HCT116 (cell line): ENCODE measurements at regions of chr11 and their contacts with region 1.

Region 1: DNA sequence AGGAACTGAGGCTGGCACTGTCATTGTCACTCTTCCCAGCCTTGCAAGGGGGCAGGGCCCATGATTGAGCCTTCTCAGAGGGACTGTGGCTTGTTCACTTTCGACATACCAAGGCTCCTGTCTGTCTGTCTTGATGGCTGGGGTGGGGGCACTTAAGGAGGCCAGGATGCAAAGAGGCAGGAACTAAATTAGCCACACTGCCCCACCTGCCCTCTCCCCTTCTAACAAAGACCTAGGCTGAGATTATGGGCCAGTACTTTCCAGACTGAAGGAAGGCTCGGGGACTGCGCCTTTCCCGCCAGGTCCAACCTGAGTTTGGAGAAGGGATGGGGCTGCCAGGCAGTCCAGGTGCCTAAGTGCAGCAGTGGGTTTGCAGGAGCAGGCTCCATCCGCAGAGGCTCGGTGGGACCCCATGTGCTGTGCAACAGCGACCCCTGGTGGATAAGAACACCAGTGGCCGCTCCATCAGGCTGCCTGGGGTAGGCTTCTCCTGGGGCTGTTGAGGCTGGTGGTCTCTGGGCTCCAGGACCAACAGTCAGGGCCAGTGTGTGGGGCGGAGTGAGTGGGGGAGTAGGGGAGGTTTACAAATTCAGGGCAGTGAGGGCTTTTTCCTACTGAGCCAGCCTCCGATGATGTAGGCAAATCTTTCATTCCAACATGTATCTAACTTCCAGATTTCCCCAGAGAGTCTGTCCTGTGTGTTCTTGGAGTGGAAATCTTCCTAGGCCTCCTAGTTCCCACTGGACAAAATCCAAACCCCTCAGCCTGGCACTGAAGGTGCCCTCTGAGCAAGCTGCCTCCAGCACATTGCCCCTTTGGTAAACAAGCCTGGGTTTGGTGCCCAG is 93.9 kb downstream of the INSC start:
- DNase-seq: peak; percentile 43
- ATAC-seq: peak; percentile 99
- H3K4me3 ChIP-seq: no peak overlapping the region
- H3K27ac ChIP-seq: no peak overlapping the region
- H3K4me1 ChIP-seq: no peaks in the 10 kb centered on the region
- H3K27me3 ChIP-seq: no peaks in the 10 kb centered on the region
- CTCF ChIP-seq: peak; percentile 83 to 95 (median 90)
- POLR2A ChIP-seq: no peak
- RAD21 ChIP-seq: peak; percentile 98

Region 2: GRCh38 chr11:14789879-14790484 is 418.6 kb before region 1 on chr11:
- CTCF ChIA-PET with region 1: interaction called, 7 read pairs
- POLR2A ChIA-PET with region 1: no interaction called
- RAD21 ChIA-PET with region 1: no interaction called
- intact Hi-C with region 1: loop called (anchors 2 kb)
- DNase-seq: no peak
- ATAC-seq: peak; percentile 46; the same call in 1 of the 2 replicates
- H3K4me3 ChIP-seq: no peak overlapping the region
- H3K27ac ChIP-seq: no peak overlapping the region
- H3K4me1 ChIP-seq: no peaks in the 10 kb centered on the region
- H3K27me3 ChIP-seq: no peaks in the 10 kb centered on the region
- CTCF ChIP-seq: peak; percentile 33 to 64 (median 64); a peak in 5 of 6 replicates
- POLR2A ChIP-seq: no peak
- RAD21 ChIP-seq: peak; percentile 72

Region 3: DNA sequence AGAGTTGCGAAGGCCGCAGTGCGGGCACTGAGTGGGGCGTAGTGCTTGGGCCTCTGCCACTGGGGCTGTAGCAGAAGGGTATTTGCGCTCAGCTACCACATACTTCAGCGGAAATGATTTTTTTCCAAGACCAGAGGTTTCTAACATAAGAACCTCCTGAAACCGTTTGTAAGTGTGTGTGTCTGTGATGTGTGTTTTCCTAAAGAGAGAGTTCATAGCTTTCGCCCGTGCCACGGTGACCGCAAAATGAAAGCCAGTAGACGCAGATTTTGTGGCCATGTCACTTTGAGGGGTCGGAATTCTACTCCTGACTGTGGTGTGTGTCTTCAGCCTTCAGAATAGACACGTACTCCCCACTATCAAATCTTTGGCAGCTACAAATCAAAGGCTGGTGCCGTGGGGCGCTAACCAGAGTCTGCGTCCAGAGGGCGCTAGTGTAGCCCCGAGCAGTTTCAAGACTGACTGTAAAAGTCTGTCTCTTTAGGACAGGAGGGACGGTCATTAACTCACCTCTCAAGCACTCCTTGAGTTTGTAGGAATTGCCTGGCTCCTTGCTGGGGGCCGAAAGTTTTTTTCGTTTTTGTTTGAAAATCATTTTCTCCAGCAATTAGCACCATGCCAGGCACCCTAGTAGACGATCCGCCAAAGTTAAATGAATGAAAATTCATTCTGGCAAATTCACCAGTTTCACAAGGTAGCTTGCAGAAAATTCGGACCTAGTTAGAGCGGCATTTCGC is 233.9 kb before region 1 on chr11:
- CTCF ChIA-PET with region 1: interaction called, 6 read pairs
- POLR2A ChIA-PET with region 1: no interaction called
- RAD21 ChIA-PET with region 1: no interaction called
- intact Hi-C with region 1: loop called (anchors 1 kb)
- DNase-seq: peak; percentile 54
- ATAC-seq: peak; percentile 86
- H3K4me3 ChIP-seq: no peak overlapping the region
- H3K27ac ChIP-seq: no peak overlapping the region
- H3K4me1 ChIP-seq: peaks cover 0 to 8% of the 10 kb centered on the region in 2 experiments; a peak in 1 of 4 replicates
- H3K27me3 ChIP-seq: no peaks in the 10 kb centered on the region
- CTCF ChIP-seq: peak; percentile 78 to 95 (median 90)
- POLR2A ChIP-seq: no peak
- RAD21 ChIP-seq: peak; percentile 70

Region 4: DNA sequence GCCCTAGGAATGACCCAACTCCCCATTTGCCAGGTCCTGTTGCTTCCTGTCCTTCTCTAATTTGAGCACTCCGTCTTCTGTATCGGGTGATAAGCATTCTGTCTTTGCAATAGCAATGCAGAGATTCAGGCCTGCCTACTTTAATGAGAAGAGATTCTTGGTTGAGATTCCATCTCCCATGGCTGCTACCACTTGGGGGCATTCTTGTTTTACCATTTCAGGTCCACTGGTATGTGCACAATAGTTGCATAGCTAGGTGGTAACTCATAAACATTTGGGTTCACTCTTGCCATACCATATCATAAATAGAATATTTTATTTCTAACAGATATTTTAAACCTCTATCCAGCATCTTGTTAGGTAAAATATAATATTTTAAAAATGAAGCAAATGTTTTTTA is 169.6 kb before region 1 on chr11:
- CTCF ChIA-PET with region 1: interaction called, 4 read pairs
- POLR2A ChIA-PET with region 1: no interaction called
- RAD21 ChIA-PET with region 1: no interaction called
- intact Hi-C with region 1: loop called (anchors 1 kb)
- DNase-seq: peak; percentile 31
- ATAC-seq: peak; percentile 58; the same call in 1 of the 2 replicates
- H3K4me3 ChIP-seq: no peak overlapping the region
- H3K27ac ChIP-seq: no peak overlapping the region
- H3K4me1 ChIP-seq: peaks cover 0 to 9% of the 10 kb centered on the region in 2 experiments; a peak in 2 of 4 replicates
- H3K27me3 ChIP-seq: no peaks in the 10 kb centered on the region
- CTCF ChIP-seq: peak; percentile 27 to 84 (median 40); a peak in 4 of 6 replicates
- POLR2A ChIP-seq: no peak
- RAD21 ChIP-seq: peak; percentile 91

Region 5: DNA sequence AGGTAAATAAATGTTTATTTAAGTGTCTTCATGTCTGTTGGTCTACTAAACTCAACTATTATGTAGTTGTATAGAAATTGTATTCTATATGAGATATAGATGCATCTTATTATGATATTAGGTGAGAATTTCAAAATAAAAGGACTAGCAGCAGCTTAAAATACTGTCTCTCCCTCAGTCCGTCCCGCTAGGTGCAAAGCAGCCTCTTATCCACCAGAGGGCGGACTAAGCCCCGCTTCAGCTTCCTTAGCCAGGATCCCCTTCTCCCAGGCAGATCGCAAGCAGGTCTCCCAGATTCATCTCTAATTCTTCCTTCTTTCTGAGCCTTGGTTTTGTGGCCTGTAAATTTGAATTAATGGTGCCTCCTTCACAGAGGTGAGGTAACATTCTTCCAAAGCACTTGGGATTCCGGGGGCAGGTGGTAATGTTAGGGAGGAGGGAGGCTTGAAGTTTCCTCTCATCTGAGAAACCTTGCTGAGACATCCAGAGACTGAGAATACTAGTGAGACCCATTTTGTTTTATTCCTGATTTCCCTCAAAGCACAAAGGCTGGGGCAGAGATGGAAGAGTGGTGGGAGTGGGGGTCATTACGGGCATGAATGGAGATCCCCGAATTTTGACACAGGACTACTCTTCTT is 107.4 kb before region 1 on chr11:
- CTCF ChIA-PET with region 1: interaction called, 42 read pairs
- POLR2A ChIA-PET with region 1: no interaction called
- RAD21 ChIA-PET with region 1: no interaction called
- intact Hi-C with region 1: loop called (anchors 1 kb)
- DNase-seq: peak; percentile 57
- ATAC-seq: peak; percentile 97
- H3K4me3 ChIP-seq: no peak overlapping the region
- H3K27ac ChIP-seq: no peak overlapping the region
- H3K4me1 ChIP-seq: peaks cover 5 to 14% of the 10 kb centered on the region in 2 experiments
- H3K27me3 ChIP-seq: no peaks in the 10 kb centered on the region; the same call in 1 of the 2 replicates
- CTCF ChIP-seq: peak; percentile 92 to 95 (median 93)
- POLR2A ChIP-seq: no peak
- RAD21 ChIP-seq: peak; percentile 96

Region 6: DNA sequence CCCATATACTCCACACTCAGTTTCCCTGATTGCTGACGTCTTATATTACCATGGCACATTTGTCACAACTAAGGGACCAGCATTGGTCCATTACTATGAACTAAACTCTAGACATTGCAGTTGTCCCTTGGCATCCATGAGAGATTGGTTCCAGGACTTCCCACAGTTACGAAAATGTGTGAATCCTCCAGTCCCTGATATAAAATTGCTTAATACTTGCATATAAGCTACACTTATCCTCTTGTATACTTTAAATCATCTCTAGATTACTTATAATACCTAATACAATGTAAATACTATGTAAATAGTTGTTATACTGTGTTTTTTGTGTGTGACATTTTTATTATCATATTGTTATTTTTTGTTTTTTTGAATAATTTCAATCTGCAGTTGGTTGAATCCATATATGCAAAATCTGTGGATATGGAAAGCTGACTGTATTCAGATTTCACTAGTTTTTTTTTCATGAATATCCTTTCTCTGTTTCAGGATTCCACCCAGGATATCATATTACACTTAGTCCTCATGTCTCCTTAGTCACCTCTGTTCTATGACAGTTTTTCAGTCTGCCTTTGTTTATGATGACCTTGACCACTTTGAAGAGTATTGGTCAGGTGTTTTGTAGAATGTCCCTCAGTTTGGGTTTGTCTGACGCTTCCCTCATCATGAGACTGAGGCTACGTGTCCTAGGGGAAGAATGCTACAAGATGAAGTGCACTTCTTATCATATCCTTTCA is 38.6 kb before region 1 on chr11:
- CTCF ChIA-PET with region 1: no interaction called
- POLR2A ChIA-PET with region 1: no interaction called
- RAD21 ChIA-PET with region 1: no interaction called
- intact Hi-C with region 1: no loop called
- DNase-seq: no peak
- ATAC-seq: no peak
- H3K4me3 ChIP-seq: no peak overlapping the region
- H3K27ac ChIP-seq: no peak overlapping the region
- H3K4me1 ChIP-seq: peaks cover 0 to 3% of the 10 kb centered on the region in 2 experiments; a peak in 1 of 4 replicates
- H3K27me3 ChIP-seq: no peaks in the 10 kb centered on the region; the same call in 1 of the 2 replicates
- CTCF ChIP-seq: no peak
- POLR2A ChIP-seq: no peak
- RAD21 ChIP-seq: no peak

Region 7: DNA sequence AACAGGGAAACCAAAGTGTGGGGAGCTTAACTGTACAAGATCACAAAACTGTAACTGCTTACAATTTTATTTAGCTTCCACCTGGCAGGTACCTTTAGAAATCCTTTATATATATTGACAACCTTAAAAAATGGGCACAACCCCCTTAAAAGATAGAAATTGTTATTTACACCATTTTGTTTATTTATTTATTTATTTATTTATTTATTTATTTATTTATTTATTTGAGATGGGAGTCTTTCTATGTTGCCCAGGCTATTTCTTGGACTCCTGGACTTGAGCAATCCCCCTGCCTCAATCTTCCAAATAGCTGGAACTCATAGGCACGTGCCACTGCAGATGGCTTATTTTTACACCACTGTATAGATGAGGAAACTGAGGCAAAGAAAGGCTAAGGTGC is 19.4 kb before region 1 on chr11:
- CTCF ChIA-PET with region 1: no interaction called
- POLR2A ChIA-PET with region 1: no interaction called
- RAD21 ChIA-PET with region 1: no interaction called
- intact Hi-C with region 1: no loop called
- DNase-seq: no peak
- ATAC-seq: no peak
- H3K4me3 ChIP-seq: no peak overlapping the region
- H3K27ac ChIP-seq: no peak overlapping the region
- H3K4me1 ChIP-seq: no peaks in the 10 kb centered on the region
- H3K27me3 ChIP-seq: no peaks in the 10 kb centered on the region
- CTCF ChIP-seq: no peak
- POLR2A ChIP-seq: no peak
- RAD21 ChIP-seq: no peak

Region 8: DNA sequence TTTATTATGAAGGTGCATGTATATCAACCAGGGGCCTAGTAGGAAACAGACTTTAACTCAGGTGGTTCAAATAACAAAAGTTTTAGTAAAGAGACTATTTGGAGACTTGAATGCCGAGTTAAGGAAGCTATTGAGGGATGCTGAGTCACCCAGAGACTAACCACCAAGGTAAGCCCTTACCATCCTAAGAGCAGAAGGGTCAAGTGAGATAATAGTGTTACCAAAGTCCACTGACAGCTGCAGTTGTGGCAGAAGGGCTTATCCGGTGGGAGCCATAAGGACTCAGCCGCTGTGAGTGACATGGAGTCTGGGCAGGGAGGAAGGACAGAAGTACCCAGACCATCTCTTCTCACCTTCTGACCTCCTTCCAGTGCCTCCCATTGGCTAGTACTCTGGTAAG is 40.1 kb after region 1 on chr11:
- CTCF ChIA-PET with region 1: no interaction called
- POLR2A ChIA-PET with region 1: no interaction called
- RAD21 ChIA-PET with region 1: no interaction called
- intact Hi-C with region 1: no loop called
- DNase-seq: no peak
- ATAC-seq: no peak
- H3K4me3 ChIP-seq: no peak overlapping the region
- H3K27ac ChIP-seq: no peak overlapping the region
- H3K4me1 ChIP-seq: no peaks in the 10 kb centered on the region
- H3K27me3 ChIP-seq: 0 out of 2 replicates have a peak, but pooled peaks cover 3% of the 10 kb centered on the region
- CTCF ChIP-seq: no peak
- POLR2A ChIP-seq: no peak
- RAD21 ChIP-seq: no peak

Region 9: DNA sequence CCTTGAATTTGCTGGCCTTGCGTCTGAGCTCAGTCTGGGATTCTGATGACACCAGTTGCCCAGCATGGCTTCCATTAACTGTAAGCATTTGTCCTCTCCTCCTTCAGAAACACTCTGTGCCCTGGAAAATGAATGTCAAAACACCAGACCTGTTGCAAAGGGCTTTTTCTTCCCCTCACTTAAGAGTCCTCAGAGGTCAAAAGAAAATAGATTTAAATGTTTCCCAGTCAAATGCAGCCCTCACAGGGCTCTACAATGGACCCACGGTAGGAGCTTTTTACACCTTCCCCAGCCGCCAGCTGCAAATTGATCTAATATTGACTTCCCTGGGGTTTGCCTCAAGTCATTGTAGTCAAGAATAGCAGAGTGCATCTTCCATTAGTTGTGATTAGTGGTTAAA is 238.3 kb after region 1 on chr11:
- CTCF ChIA-PET with region 1: no interaction called
- POLR2A ChIA-PET with region 1: no interaction called
- RAD21 ChIA-PET with region 1: no interaction called
- intact Hi-C with region 1: no loop called
- DNase-seq: no peak
- ATAC-seq: no peak
- H3K4me3 ChIP-seq: no peak overlapping the region
- H3K27ac ChIP-seq: no peak overlapping the region
- H3K4me1 ChIP-seq: no peaks in the 10 kb centered on the region
- H3K27me3 ChIP-seq: peaks cover 14% of the 10 kb centered on the region; the same call in 1 of the 2 replicates
- CTCF ChIP-seq: no peak
- POLR2A ChIP-seq: no peak
- RAD21 ChIP-seq: no peak